HEK293 (cell line): ENCODE measurements at regions of chr7 and their contacts with region 1.

Region 1: DNA sequence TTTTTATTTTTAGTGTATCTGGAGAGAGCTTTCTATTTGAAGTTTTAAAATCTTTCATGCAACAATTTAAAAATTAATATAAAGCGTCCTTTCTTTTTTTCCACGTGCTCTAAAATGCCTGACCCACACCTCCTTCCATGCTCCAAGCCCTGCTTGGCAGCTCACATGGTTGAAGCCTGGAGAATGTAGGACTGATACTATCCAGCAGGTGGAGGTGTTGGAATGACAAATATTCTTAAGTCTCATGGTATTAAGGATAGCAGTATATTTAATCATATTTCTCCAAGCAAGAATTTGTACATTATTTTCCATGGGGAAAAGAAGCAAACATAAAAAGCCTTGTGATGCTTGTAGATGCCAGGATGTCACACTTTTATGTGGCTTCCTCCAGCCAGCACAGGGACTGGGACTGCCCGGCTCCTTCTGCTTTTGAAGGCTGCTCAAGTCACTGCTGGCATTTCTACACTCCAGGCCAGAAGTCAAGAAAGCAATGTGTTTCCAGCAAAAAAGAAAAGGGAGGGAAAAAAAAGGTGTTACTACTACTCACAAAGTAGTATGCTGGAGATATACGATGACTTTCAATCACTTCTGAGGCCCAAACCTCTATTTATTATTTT is 49.7 kb downstream of the BZW2 start:
- H3K4me3 ChIP-seq: no peak overlapping the region
- H3K27ac ChIP-seq: no peak overlapping the region
- H3K4me1 ChIP-seq: no peaks in the 10 kb centered on the region
- CTCF ChIP-seq: no peak

Region 2: GRCh38 chr7:16670731-16671344 is 24.9 kb before region 1 on chr7:
- CTCF ChIA-PET with region 1: no interaction called
- POLR2A ChIA-PET with region 1: no interaction called
- H3K4me3 ChIP-seq: no peak overlapping the region
- H3K27ac ChIP-seq: no peak overlapping the region
- H3K4me1 ChIP-seq: peaks cover 4% of the 10 kb centered on the region; the same call in 1 of the 2 replicates
- CTCF ChIP-seq: no peak

Region 3: DNA sequence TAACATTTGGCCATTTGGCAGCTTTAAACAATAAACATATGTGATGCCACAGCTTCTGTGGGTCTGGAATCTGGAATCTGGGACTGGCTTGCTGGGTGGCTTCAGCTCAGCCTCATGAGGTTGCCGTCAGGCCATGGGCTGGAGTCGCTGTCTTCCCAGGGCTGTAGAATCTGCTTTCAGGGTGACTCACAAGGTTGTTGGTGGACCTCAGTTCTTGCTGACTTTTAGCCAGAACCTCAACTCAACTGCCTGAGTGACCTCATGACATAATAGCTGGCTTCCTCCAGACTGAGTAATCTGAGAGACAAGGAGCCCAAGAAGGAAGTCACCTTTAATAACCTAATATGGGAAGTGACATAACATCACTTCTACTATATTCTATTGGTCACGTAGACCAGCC is 13.3 kb after region 1 on chr7:
- CTCF ChIA-PET with region 1: interaction called, 10 read pairs
- POLR2A ChIA-PET with region 1: no interaction called
- H3K4me3 ChIP-seq: no peak overlapping the region
- H3K27ac ChIP-seq: no peak overlapping the region
- H3K4me1 ChIP-seq: no peaks in the 10 kb centered on the region
- CTCF ChIP-seq: no peak

Region 4: DNA sequence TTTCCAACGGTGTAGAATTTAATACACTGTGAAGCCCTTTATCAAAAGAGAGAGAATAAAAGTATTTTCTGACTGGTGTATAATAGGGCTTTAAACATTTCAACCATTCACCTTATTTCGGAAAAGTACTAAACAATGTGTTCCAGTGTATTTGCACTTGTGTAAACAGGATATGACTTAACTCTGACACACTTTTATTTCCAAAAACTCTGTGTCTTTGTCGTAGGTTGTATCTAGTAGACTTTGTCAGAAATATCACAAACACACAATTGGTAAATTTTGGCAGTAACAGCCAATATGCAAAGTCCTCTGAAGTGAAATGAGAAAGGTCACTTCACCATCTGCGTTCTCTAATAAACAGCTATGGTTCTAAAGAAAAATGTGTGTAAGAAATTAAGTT is 47.5 kb after region 1 on chr7:
- CTCF ChIA-PET with region 1: interaction called, 11 read pairs
- POLR2A ChIA-PET with region 1: no interaction called
- H3K4me3 ChIP-seq: no peak overlapping the region
- H3K27ac ChIP-seq: no peak overlapping the region
- H3K4me1 ChIP-seq: peaks cover 14% of the 10 kb centered on the region
- CTCF ChIP-seq: no peak